OCI-LY7 (cell line): ENCODE measurements at regions of chr10 and their contacts with region 1.

Region 1: GRCh38 chr10:21495752-21496342 is 29.6 kb downstream of the SKIDA1 start:
- DNase-seq: peak; percentile 87
- H3K4me3 ChIP-seq: peak overlapping the region; percentile 77
- H3K27ac ChIP-seq: peak overlapping the region; percentile 45
- H3K4me1 ChIP-seq: peaks cover 13% of the 10 kb centered on the region
- CTCF ChIP-seq: peak; percentile 90

Region 2: DNA sequence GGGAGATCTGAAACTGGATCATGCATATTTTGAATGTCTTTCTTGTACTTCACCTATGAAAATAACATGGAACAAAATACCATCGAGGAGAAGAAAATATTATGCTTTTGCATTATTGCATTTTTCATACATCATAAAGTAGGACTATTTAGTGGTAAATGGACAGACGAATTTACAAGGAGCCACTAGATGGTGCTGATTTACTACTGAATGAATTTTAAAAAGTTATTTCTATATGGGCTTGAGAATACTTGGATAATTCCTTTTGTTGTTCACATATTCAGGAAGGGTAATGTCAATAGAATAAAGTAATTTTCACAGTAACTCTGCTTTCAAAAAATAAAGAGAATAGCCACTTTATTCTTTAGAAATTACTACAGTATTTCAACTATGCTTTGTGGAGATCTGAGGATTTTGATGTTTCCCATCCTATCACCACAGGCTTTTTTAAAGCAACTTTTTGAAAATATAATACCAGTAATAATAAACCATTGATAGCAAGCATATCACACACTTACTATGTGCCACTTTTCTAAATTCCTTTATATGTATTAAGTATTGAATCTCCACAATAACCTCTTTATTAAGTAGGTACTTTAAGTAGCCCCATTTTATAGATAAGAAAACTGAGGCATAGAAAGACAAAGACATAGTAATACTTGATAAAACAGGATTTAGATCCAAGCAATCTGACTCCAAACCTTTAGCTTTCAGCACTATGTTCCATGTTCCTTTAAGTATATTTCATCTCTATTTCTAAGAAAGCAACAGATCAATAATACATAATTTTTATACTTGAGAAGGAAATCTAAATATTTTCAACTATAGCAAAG is 637.3 kb before region 1 on chr10:
- CTCF ChIA-PET with region 1: no interaction called
- POLR2A ChIA-PET with region 1: no interaction called
- intact Hi-C with region 1: loop called (anchors 5 kb)
- DNase-seq: peak; percentile 44
- H3K4me3 ChIP-seq: no peak overlapping the region
- H3K27ac ChIP-seq: no peak overlapping the region
- H3K4me1 ChIP-seq: no peaks in the 10 kb centered on the region
- CTCF ChIP-seq: peak; percentile 89

Region 3: GRCh38 chr10:21336476-21337170 is 159.2 kb before region 1 on chr10:
- CTCF ChIA-PET with region 1: no interaction called
- POLR2A ChIA-PET with region 1: no interaction called
- intact Hi-C with region 1: no loop called
- DNase-seq: no peak
- H3K4me3 ChIP-seq: no peak overlapping the region
- H3K27ac ChIP-seq: no peak overlapping the region
- H3K4me1 ChIP-seq: no peaks in the 10 kb centered on the region
- CTCF ChIP-seq: no peak

Region 4: GRCh38 chr10:21533467-21534279 is 37.8 kb after region 1 on chr10 and contains the start of gene MLLT10:
- CTCF ChIA-PET with region 1: no interaction called
- POLR2A ChIA-PET with region 1: no interaction called
- intact Hi-C with region 1: loop called (anchors 1 kb)
- DNase-seq: peak; percentile 98
- H3K4me3 ChIP-seq: peak within 1 kb of the TSS; percentile 72
- H3K27ac ChIP-seq: peak within 1 kb of the TSS; percentile 70
- H3K4me1 ChIP-seq: peaks cover 24% of the 10 kb centered on the region
- CTCF ChIP-seq: no peak
- total RNA-seq, gene MLLT10: 50.4 and 68.4 TPM in 2 replicates

Region 5: GRCh38 chr10:21953585-21954057 is 457.8 kb after region 1 on chr10:
- CTCF ChIA-PET with region 1: no interaction called
- POLR2A ChIA-PET with region 1: no interaction called
- intact Hi-C with region 1: loop called (anchors 1 kb)
- DNase-seq: peak; percentile 59
- H3K4me3 ChIP-seq: no peak overlapping the region
- H3K27ac ChIP-seq: no peak overlapping the region
- H3K4me1 ChIP-seq: peaks cover 8% of the 10 kb centered on the region
- CTCF ChIP-seq: peak; percentile 73

Region 6: GRCh38 chr10:22988581-22989360 is 1492.9 kb after region 1 on chr10:
- CTCF ChIA-PET with region 1: no interaction called
- POLR2A ChIA-PET with region 1: no interaction called
- intact Hi-C with region 1: loop called (anchors 5 kb)
- DNase-seq: peak; percentile 74
- H3K4me3 ChIP-seq: no peak overlapping the region
- H3K27ac ChIP-seq: no peak overlapping the region
- H3K4me1 ChIP-seq: no peaks in the 10 kb centered on the region
- CTCF ChIP-seq: peak; percentile 98